BJ (cell line): ENCODE measurements at regions of chr12 and their contacts with region 1.

Region 1: DNA sequence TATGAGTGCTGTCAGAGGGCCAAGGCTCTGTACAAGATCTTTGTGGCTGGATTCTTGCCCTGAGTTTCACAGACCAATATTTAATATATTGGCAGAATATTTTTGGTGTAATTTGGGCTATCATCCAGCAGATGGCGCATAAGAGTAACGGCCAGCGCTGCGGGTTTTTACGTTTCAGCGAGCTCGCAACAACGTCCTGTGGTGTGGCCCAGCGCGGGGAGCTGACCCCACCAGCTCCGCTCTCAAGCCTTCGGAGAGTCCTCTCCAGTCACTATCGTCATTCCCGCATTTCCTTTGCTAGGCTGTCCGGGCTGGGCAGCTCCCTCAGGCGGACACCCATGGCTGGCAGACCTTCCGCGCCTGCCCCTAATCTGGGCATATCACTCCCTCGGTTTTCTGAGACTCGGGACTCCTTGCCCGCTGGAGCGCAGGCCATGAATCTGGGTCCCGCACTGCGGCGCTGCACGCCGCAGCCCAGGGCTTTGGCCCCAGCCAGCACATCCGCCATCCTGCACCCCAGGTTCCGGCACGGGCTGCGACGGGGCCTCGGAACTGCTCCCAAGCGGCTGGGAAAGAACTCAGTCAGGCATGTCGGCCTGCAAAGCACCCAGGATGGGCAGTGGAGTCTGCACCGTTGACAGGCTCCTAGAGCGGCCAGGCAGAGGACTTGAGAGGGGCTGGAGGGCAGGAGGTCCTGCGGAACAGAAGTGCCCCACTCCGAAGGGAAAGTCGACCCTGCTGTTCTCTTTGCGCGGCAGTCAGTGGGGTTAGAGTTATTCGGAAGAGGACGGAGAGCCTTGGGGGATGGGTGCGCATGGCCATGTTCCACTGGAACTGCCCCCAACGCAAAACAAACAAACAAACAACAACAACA is 18.4 kb downstream of the OLR1 start:
- DNase-seq: no peak
- H3K4me3 ChIP-seq: peak overlapping the region; percentile 36
- H3K27me3 ChIP-seq: no peaks in the 10 kb centered on the region
- CTCF ChIP-seq: peak; percentile 83

Region 2: DNA sequence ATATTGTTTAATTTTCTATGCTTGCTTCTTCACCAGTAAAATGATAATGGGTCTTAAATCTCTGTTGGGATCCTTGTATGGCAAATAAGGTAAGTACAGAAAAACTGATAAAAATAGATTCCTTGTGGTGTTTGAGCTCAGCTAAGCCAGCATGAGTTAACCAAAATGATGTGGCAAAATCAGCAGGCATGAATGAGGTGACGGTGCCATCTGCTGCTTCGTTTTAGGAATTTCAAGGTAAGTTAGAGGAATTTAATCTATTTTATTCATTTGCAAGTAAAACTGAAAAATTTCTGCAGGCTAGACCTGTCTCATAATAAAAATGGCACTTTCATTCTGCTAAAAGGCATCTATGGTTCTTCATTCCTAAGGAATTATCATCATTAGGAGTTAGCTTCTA is 13.5 kb before region 1 on chr12:
- CTCF ChIA-PET with region 1: interaction called, 21 read pairs
- POLR2A ChIA-PET with region 1: no interaction called
- DNase-seq: no peak
- H3K4me3 ChIP-seq: no peak overlapping the region
- H3K27me3 ChIP-seq: no peaks in the 10 kb centered on the region
- CTCF ChIP-seq: peak; percentile 58

Region 3: DNA sequence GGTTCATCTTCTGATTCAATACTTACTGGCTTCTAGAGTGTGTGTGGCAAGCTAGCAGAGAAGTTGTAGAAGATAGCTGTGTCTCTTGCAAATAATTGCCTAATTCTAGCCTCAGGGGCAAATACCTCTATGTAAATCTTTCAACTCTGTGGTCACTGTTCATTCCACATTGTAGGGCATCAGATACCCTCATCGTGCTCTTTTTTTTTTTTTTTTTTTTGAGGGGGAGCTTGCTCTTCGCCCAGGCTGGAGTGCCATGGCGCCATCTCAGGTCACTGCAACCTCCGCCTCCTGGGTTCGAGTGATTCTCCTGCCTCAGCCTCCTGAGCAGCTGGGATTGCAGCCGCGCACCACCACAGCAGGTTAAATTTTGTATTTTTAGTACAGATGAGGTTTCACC is 16.8 kb after region 1 on chr12:
- CTCF ChIA-PET with region 1: interaction called, 18 read pairs
- POLR2A ChIA-PET with region 1: interaction called, 4 read pairs
- DNase-seq: no peak
- H3K4me3 ChIP-seq: no peak overlapping the region
- H3K27me3 ChIP-seq: no peaks in the 10 kb centered on the region
- CTCF ChIP-seq: no peak

Region 4: DNA sequence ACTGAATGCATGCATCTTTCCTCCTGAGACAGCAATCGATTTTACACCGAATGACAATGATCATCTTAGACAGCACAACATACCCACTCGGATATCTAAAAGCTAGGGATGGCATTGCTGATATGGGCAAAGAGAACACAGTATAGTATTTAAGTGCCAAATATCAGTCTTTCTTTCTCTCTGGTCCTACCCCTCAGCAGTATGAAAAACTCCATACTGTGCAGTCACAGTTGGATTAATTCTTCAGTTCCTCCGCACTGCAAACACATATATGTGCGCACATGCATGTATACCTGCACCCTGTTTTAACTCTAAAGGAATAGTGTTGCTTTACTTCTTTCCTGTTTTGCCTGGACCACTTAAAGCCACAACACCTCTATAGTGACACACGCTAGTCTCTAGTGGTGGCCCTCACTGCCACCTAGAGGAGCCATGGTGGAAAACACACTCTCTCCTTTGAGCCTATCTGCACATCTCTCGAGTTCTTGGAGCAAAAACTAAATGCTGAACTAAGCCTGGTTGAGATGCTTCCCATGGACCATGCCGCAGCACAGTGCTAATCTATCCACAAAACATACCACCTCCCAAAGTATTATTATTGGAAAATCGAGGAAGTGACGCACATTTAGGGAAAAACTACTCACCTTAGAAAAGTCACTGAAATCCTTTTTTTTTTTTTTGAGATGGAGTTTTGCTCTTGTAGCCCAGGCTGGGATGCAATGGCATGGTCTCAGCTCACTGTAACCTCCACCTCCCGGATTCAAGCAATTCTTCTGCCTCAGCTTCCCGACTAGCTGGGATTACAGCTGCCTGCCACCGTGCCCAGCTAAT is 37.3 kb after region 1 on chr12:
- CTCF ChIA-PET with region 1: interaction called, 109 read pairs
- POLR2A ChIA-PET with region 1: no interaction called
- DNase-seq: no peak
- H3K4me3 ChIP-seq: no peak overlapping the region
- H3K27me3 ChIP-seq: no peaks in the 10 kb centered on the region
- CTCF ChIP-seq: peak; percentile 86

Region 5: GRCh38 chr12:10196210-10196609 is 42.7 kb after region 1 on chr12:
- CTCF ChIA-PET with region 1: interaction called, 109 read pairs
- POLR2A ChIA-PET with region 1: no interaction called
- DNase-seq: no peak
- H3K4me3 ChIP-seq: no peak overlapping the region
- H3K27me3 ChIP-seq: no peaks in the 10 kb centered on the region
- CTCF ChIP-seq: no peak

Region 6: GRCh38 chr12:10212201-10213131 is 59.0 kb after region 1 on chr12 and contains the start of gene GABARAPL1:
- CTCF ChIA-PET with region 1: interaction called, 17 read pairs
- POLR2A ChIA-PET with region 1: no interaction called
- DNase-seq: peak; percentile 98
- H3K4me3 ChIP-seq: peak within 1 kb of the TSS; percentile 98
- H3K27me3 ChIP-seq: no peaks in the 10 kb centered on the region
- CTCF ChIP-seq: no peak
- polyA plus RNA-seq, gene GABARAPL1: 192 and 275 TPM in 2 replicates

Region 7: GRCh38 chr12:10395390-10395998 is 242.0 kb after region 1 on chr12:
- CTCF ChIA-PET with region 1: no interaction called
- POLR2A ChIA-PET with region 1: no interaction called
- DNase-seq: peak; percentile 77
- H3K4me3 ChIP-seq: no peak overlapping the region
- H3K27me3 ChIP-seq: no peaks in the 10 kb centered on the region
- CTCF ChIP-seq: no peak